CD4-positive, alpha-beta memory T cell (primary cell): ENCODE measurements at regions of chr10 and their contacts with region 1.

Region 1: GRCh38 chr10:62637249-62638061 is 167.1 kb upstream of the ADO start:
- DNase-seq: peak; percentile 72 to 83 (median 75)
- H3K4me3 ChIP-seq: peak overlapping the region; percentile 31 to 34
- H3K4me3 Mint-ChIP-seq: no peak overlapping the region
- H3K27ac ChIP-seq: peak overlapping the region; percentile 78
- H3K27ac Mint-ChIP-seq: no peak overlapping the region
- H3K4me1 ChIP-seq: peaks cover 41% of the 10 kb centered on the region
- H3K4me1 Mint-ChIP-seq: peaks cover 6 to 22% (median 16%) of the 10 kb centered on the region in 4 donors
- H3K27me3 ChIP-seq: no peaks in the 10 kb centered on the region
- H3K27me3 Mint-ChIP-seq: no peaks in the 10 kb centered on the region

Region 2: DNA sequence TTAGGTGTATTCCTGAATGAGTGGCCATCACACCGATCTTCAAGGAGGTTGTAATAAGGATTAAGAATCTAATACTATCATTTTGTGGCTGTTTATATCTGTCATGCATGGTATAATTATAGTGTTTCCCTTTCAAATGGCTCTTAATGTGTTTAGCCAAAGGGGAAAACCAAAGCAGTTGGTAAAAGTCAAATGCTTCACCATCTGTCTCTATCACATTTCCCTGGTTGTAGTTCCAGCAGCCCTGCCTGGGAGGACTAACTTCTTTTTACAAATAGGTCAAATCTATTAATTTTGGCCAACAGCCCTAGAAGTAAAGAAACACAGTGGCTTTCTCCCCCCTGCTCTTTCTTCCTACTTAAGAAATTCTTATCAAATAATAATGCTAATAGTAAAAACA is 206.6 kb before region 1 on chr10:
- CTCF ChIA-PET with region 1: no interaction called
- POLR2A ChIA-PET with region 1: no interaction called
- intact Hi-C with region 1: no loop called
- DNase-seq: no peak
- H3K4me3 ChIP-seq: no peak overlapping the region
- H3K4me3 Mint-ChIP-seq: no peak overlapping the region
- H3K27ac ChIP-seq: no peak overlapping the region
- H3K27ac Mint-ChIP-seq: no peak overlapping the region
- H3K4me1 ChIP-seq: no peaks in the 10 kb centered on the region
- H3K4me1 Mint-ChIP-seq: peaks cover 0 to 3% (median 0%) of the 10 kb centered on the region in 4 donors
- H3K27me3 ChIP-seq: no peaks in the 10 kb centered on the region
- H3K27me3 Mint-ChIP-seq: peaks cover 0 to 3% of the 10 kb centered on the region in 2 donors

Region 3: DNA sequence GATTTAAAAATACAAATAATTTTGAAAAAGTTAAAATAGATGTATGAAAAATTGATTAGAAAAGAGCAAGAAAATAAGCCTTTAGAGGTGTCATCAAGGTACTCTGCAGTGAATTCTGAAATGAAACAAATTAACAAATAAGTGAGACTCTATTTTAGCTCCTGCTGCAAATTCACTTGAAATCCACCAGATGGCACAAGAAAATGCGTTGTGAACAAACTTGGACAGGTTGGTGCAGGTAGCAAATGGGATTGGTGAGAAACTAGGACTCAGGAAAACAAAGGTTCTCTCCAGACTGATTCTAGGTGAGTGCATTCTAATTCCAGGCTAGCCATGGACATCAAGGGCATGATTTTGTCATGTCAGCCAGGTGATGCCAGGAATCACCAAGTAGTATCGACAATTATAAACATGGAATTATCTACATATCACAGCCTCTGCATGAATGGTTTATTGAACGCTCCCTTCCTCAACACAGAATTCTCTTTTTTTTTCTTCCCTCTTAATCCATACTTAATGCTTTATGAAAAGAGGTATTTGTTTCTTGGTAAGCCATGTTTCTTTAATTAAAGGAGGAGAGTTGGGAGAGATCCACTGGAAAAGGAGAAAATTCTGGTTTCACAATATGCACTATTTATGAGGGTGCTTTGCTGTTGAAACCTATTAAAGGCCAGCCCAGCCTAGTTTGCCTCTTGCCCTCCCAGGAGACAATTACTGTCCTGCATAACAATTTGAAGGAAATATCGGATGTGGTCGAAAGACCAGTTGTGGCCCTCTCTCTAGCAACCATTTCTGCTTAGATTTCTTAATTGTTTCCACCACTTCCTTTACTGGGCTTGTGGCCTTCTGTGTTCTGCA is 145.2 kb before region 1 on chr10:
- CTCF ChIA-PET with region 1: no interaction called
- POLR2A ChIA-PET with region 1: no interaction called
- intact Hi-C with region 1: loop called (anchors 1 kb)
- DNase-seq: peak in 4 of 5 donors; percentile 12 to 35 (median 23)
- H3K4me3 ChIP-seq: no peak overlapping the region
- H3K4me3 Mint-ChIP-seq: no peak overlapping the region
- H3K27ac ChIP-seq: no peak overlapping the region
- H3K27ac Mint-ChIP-seq: no peak overlapping the region
- H3K4me1 ChIP-seq: no peaks in the 10 kb centered on the region
- H3K4me1 Mint-ChIP-seq: peaks cover 0 to 2% (median 0%) of the 10 kb centered on the region in 4 donors
- H3K27me3 ChIP-seq: no peaks in the 10 kb centered on the region
- H3K27me3 Mint-ChIP-seq: peaks cover 1 to 2% of the 10 kb centered on the region in 2 donors

Region 4: GRCh38 chr10:62618576-62619412 is 18.7 kb before region 1 on chr10:
- CTCF ChIA-PET with region 1: interaction called, 7 read pairs
- POLR2A ChIA-PET with region 1: interaction called, 3 read pairs
- intact Hi-C with region 1: loop called (anchors 2 kb)
- DNase-seq: no peak
- H3K4me3 ChIP-seq: no peak overlapping the region
- H3K4me3 Mint-ChIP-seq: no peak overlapping the region
- H3K27ac ChIP-seq: no peak overlapping the region
- H3K27ac Mint-ChIP-seq: peak overlapping the region in 1 of 7 donors; percentile 32
- H3K4me1 ChIP-seq: no peaks in the 10 kb centered on the region
- H3K4me1 Mint-ChIP-seq: peaks cover 9 to 20% (median 11%) of the 10 kb centered on the region in 4 donors
- H3K27me3 ChIP-seq: no peaks in the 10 kb centered on the region
- H3K27me3 Mint-ChIP-seq: peaks cover 0 to 2% of the 10 kb centered on the region in 2 donors

Region 5: DNA sequence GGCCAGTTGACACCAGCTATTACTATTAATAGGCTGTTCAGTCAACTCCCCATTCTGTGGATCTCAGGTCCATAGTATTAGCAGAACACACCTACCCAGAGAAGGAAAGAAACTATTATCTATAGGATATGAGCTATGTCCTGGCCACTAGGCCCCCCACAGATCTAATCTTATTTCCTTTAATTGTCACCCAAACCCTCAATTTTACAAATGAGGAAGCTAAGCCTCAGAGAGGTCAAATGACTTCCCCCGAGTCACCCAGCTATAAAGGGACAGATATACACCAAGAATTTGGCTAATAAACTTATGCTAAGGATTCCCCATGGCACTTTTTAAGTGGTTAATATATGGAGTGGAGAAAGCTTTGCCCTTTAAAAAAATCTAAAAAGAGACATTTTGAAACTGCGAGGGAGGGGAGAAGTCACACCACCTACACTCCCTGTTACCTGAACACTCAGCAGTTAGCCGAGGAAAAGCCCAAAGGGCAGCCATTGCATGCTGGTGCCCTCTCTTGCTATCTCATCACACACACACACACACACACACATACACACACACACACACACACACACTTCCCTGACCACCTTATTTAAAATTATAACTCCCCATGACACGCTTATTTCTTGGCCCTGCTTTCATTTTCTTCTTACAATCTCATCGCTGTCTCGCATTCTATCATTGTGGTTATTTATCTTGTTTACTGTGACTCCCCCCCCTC is 10.1 kb after region 1 on chr10:
- CTCF ChIA-PET with region 1: no interaction called
- POLR2A ChIA-PET with region 1: interaction called, 10 read pairs
- intact Hi-C with region 1: no loop called
- DNase-seq: no peak
- H3K4me3 ChIP-seq: no peak overlapping the region
- H3K4me3 Mint-ChIP-seq: peak overlapping the region in 2 of 8 donors; percentile 1 to 23
- H3K27ac ChIP-seq: no peak overlapping the region
- H3K27ac Mint-ChIP-seq: peak overlapping the region in 1 of 7 donors; percentile 2
- H3K4me1 ChIP-seq: peaks cover 10% of the 10 kb centered on the region
- H3K4me1 Mint-ChIP-seq: peaks cover 5 to 15% (median 9%) of the 10 kb centered on the region in 4 donors
- H3K27me3 ChIP-seq: no peaks in the 10 kb centered on the region
- H3K27me3 Mint-ChIP-seq: no peaks in the 10 kb centered on the region

Region 6: GRCh38 chr10:62689712-62690111 is 52.3 kb after region 1 on chr10:
- CTCF ChIA-PET with region 1: interaction called, 4 read pairs
- POLR2A ChIA-PET with region 1: interaction called, 16 read pairs
- intact Hi-C with region 1: loop called (anchors 2 kb)
- DNase-seq: peak in 4 of 5 donors; percentile 35 to 54 (median 49)
- H3K4me3 ChIP-seq: peak overlapping the region in 1 of 2 donors; percentile 15
- H3K4me3 Mint-ChIP-seq: peak overlapping the region; percentile 68 to 88 (median 80)
- H3K27ac ChIP-seq: peak overlapping the region; percentile 55
- H3K27ac Mint-ChIP-seq: peak overlapping the region; percentile 75 to 95 (median 90)
- H3K4me1 ChIP-seq: peaks cover 43% of the 10 kb centered on the region
- H3K4me1 Mint-ChIP-seq: peaks cover 35 to 65% (median 52%) of the 10 kb centered on the region in 4 donors
- H3K27me3 ChIP-seq: no peaks in the 10 kb centered on the region
- H3K27me3 Mint-ChIP-seq: no peaks in the 10 kb centered on the region

Region 7: GRCh38 chr10:62779487-62780248 is 142.2 kb after region 1 on chr10:
- CTCF ChIA-PET with region 1: interaction called, 11 read pairs
- POLR2A ChIA-PET with region 1: interaction called, 16 read pairs
- intact Hi-C with region 1: no loop called
- DNase-seq: peak; percentile 84 to 96 (median 90)
- H3K4me3 ChIP-seq: no peak overlapping the region
- H3K4me3 Mint-ChIP-seq: peak overlapping the region in 5 of 8 donors; percentile 33 to 75 (median 66)
- H3K27ac ChIP-seq: peak overlapping the region; percentile 32
- H3K27ac Mint-ChIP-seq: peak overlapping the region; percentile 57 to 94 (median 79)
- H3K4me1 ChIP-seq: peaks cover 20% of the 10 kb centered on the region
- H3K4me1 Mint-ChIP-seq: peaks cover 13 to 20% (median 16%) of the 10 kb centered on the region in 4 donors
- H3K27me3 ChIP-seq: no peaks in the 10 kb centered on the region
- H3K27me3 Mint-ChIP-seq: no peaks in the 10 kb centered on the region

Region 8: DNA sequence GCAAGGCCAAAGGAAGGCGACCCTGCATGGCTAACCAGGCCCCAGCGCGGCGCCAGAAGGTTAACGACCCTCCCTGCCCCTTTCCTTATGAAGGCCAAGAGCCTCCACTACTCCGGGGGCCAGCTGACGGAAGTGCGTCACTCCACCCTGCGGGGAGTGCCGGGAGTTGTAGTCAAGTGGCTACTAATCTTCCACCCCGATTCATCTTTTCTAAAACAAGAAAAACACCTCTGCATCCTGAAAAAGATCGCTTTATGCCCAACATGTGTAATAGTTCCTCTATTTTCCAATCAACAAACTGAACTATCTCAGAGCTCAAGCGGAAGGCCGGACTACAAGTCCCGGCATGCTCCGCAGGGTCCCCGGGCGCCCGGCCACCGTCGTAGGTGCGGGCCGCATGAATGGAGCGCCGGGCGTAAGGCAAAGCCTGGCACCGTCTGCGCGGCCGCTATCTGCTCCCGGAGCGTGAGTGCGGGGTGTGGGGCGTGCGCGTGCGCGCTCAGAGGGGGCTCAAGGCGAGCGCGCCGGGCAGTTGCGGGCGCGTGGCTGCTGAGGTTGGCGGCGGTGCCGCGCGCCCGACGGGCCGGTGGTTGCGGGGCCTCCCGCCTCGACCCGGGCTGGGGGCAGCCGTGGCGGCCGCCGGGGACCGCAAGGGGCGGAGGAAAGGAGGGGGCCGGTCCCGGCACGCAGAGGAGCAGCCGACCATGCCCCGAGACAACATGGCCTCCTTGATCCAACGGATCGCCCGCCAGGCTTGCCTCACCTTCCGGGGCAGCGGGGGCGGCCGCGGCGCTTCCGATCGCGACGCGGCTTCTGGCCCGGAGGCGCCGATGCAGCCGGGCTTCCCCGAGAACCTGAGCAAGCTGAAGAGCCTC is 167.1 kb after region 1 on chr10 and contains the start of gene ADO:
- CTCF ChIA-PET with region 1: interaction called, 9 read pairs
- POLR2A ChIA-PET with region 1: interaction called, 29 read pairs
- intact Hi-C with region 1: loop called (anchors 1 kb)
- DNase-seq: peak; percentile 80 to 86 (median 83)
- H3K4me3 ChIP-seq: peak within 1 kb of the TSS; percentile 60 to 88
- H3K4me3 Mint-ChIP-seq: peak within 1 kb of the TSS; percentile 91 to 99 (median 96)
- H3K27ac ChIP-seq: peak within 1 kb of the TSS; percentile 83
- H3K27ac Mint-ChIP-seq: peak within 1 kb of the TSS; percentile 96 to 100 (median 99)
- H3K4me1 ChIP-seq: peaks cover 35% of the 10 kb centered on the region
- H3K4me1 Mint-ChIP-seq: peaks cover 22 to 45% (median 33%) of the 10 kb centered on the region in 4 donors
- H3K27me3 ChIP-seq: no peaks in the 10 kb centered on the region
- H3K27me3 Mint-ChIP-seq: no peaks in the 10 kb centered on the region
- total RNA-seq, gene ADO: 18.6 to 19.1 TPM